IMR-90 (cell line): ENCODE measurements at regions of chr16 and their contacts with region 1.

Region 1: DNA sequence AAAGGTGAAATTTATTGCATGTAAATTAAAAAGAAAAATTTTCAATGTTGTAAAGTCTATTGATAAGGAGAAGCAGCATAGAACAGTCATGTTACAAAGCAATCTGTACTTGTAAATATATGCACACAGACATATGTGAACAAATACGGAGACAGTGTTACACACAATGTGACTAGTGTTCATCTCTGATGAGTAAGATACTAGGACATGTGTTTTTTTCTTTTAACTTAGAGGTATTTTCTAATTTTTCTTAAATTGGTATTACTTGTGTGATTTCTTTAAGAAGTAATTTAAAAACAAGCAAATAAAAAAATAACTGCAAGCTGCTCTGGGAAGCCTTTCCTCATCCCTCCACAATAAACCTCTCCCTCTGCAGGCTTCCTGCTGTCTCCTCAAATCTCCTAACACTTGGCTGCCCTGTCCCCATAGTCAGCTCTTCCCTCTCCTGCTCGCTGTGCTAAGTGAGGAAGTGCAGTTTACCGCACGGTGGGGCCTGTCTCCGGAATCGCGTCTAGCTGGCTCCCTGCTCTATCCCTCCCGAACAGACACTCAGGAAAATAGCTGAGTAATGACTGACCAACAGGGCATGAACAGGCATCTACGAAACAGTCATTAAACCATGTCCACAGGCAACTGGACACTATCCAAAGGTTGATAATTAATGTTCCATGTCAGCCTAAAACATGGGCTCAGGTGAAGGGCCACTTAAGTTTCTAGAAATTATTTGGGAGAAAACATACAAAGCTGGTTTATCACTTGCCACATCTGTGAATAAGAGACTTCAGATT is 35.9 kb downstream of the CMTM4 start:
- DNase-seq: peak; percentile 84
- ATAC-seq: peak; percentile 96
- H3K4me3 ChIP-seq: no peak overlapping the region
- H3K27ac ChIP-seq: peak overlapping the region; percentile 41; the same call in 1 of the 2 replicates
- H3K4me1 ChIP-seq: peaks cover 8% of the 10 kb centered on the region
- H3K27me3 ChIP-seq: no peaks in the 10 kb centered on the region
- CTCF ChIP-seq: peak; percentile 38
- POLR2A ChIP-seq: no peak
- RAD21 ChIP-seq: peak; percentile 41

Region 2: DNA sequence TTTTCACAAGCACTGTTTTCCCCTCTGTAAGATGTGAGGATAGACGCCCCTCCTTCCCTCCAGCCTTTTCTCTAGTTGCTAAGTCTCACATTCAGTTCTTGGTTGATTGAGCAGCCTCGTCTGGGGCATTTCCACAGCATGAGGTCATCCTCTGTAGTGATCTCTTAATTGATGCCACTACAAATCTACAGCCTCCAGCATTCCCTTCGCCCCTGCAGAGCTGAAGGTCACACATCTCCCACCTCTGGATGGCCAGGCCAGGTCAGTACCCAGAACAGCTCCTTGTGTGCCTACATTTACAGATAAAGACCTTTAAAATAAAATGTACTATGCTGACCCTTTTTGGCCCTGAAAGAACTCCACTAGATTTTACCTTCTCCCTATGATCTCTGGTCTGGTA is 1506.3 kb before region 1 on chr16:
- CTCF ChIA-PET with region 1: no interaction called
- POLR2A ChIA-PET with region 1: no interaction called
- dilution Hi-C with region 1: no loop called
- in situ Hi-C with region 1: no loop called
- intact Hi-C with region 1: no loop called
- DNase-seq: no peak
- ATAC-seq: no peak
- H3K4me3 ChIP-seq: no peak overlapping the region
- H3K27ac ChIP-seq: no peak overlapping the region
- H3K4me1 ChIP-seq: no peaks in the 10 kb centered on the region
- H3K27me3 ChIP-seq: peaks cover 4% of the 10 kb centered on the region; the same call in 1 of the 2 replicates
- CTCF ChIP-seq: no peak
- POLR2A ChIP-seq: no peak
- RAD21 ChIP-seq: no peak

Region 3: DNA sequence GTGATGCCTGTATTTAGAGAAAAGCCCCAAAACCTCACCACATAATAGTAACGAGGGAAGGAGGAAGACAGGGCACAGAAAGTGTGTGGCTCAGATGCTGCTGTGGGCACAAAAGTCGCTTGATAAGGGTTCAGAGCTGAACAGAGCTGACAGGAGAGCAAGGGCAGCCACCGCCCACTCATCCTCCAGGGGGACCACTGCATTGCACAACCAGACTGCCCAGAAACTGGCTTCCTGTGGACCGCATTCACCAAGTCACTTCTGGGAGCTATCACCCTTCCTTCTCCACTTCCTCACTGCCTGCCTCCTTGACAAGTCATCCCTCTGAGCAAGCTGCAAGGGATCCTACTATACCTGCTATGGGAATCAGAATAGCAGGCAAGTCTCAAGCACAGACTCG is 1026.3 kb before region 1 on chr16:
- CTCF ChIA-PET with region 1: no interaction called
- POLR2A ChIA-PET with region 1: no interaction called
- dilution Hi-C with region 1: no loop called
- in situ Hi-C with region 1: no loop called
- intact Hi-C with region 1: no loop called
- DNase-seq: peak; percentile 4
- ATAC-seq: no peak
- H3K4me3 ChIP-seq: no peak overlapping the region
- H3K27ac ChIP-seq: no peak overlapping the region
- H3K4me1 ChIP-seq: no peaks in the 10 kb centered on the region
- H3K27me3 ChIP-seq: peaks cover 16% of the 10 kb centered on the region
- CTCF ChIP-seq: no peak
- POLR2A ChIP-seq: no peak
- RAD21 ChIP-seq: no peak

Region 4: GRCh38 chr16:66673691-66674090 is 13.1 kb after region 1 on chr16:
- CTCF ChIA-PET with region 1: interaction called, 10 read pairs
- POLR2A ChIA-PET with region 1: interaction called, 4 read pairs
- dilution Hi-C with region 1: no loop called
- in situ Hi-C with region 1: no loop called
- intact Hi-C with region 1: no loop called
- DNase-seq: no peak
- ATAC-seq: no peak
- H3K4me3 ChIP-seq: no peak overlapping the region
- H3K27ac ChIP-seq: no peak overlapping the region
- H3K4me1 ChIP-seq: peaks cover 7% of the 10 kb centered on the region; the same call in 1 of the 2 replicates
- H3K27me3 ChIP-seq: no peaks in the 10 kb centered on the region
- CTCF ChIP-seq: no peak
- POLR2A ChIP-seq: no peak
- RAD21 ChIP-seq: no peak

Region 5: DNA sequence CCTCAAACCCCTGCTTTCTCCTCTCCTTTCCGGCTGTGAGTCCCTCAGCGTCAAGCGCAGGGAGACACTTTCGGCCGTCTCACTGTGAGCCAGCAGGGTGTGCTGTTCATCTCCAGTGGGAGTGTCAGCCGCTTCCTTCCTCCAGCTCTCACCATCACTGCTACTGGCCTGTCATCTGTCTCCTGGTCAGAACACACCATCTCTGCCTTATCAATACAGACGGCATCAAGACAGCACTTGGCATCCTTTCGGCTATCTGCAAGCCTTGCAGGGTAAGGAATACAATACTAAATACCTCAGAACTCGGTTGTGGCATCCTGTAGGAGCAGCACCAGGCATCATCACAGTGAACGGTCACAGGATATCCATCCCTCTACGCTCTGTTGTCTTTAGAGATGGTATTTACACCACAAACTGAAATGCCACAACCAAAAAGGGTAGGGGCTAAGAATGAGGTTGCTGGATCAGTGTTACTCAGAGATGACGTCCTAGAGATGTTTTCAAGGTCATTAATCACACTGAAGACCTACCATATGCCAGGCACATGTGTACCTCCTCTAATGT is 56.6 kb after region 1 on chr16:
- CTCF ChIA-PET with region 1: interaction called, 3 read pairs
- POLR2A ChIA-PET with region 1: no interaction called
- dilution Hi-C with region 1: no loop called
- in situ Hi-C with region 1: no loop called
- intact Hi-C with region 1: loop called (anchors 5 kb)
- DNase-seq: peak; percentile 88
- ATAC-seq: peak; percentile 67
- H3K4me3 ChIP-seq: no peak overlapping the region
- H3K27ac ChIP-seq: no peak overlapping the region
- H3K4me1 ChIP-seq: peaks cover 7% of the 10 kb centered on the region
- H3K27me3 ChIP-seq: no peaks in the 10 kb centered on the region
- CTCF ChIP-seq: peak; percentile 52
- POLR2A ChIP-seq: no peak
- RAD21 ChIP-seq: peak; percentile 36

Region 6: GRCh38 chr16:66858740-66859396 is 198.3 kb after region 1 on chr16:
- CTCF ChIA-PET with region 1: no interaction called
- POLR2A ChIA-PET with region 1: no interaction called
- dilution Hi-C with region 1: no loop called
- in situ Hi-C with region 1: no loop called
- intact Hi-C with region 1: no loop called
- DNase-seq: peak; percentile 49
- ATAC-seq: peak; percentile 60; the same call in 1 of the 2 replicates
- H3K4me3 ChIP-seq: no peak overlapping the region
- H3K27ac ChIP-seq: no peak overlapping the region
- H3K4me1 ChIP-seq: no peaks in the 10 kb centered on the region
- H3K27me3 ChIP-seq: peaks cover 6% of the 10 kb centered on the region
- CTCF ChIP-seq: no peak
- POLR2A ChIP-seq: no peak
- RAD21 ChIP-seq: no peak